Stomach (tissue), 19 donors: ENCODE measurements at regions of chr15 and their contacts with region 1.

Region 1: DNA sequence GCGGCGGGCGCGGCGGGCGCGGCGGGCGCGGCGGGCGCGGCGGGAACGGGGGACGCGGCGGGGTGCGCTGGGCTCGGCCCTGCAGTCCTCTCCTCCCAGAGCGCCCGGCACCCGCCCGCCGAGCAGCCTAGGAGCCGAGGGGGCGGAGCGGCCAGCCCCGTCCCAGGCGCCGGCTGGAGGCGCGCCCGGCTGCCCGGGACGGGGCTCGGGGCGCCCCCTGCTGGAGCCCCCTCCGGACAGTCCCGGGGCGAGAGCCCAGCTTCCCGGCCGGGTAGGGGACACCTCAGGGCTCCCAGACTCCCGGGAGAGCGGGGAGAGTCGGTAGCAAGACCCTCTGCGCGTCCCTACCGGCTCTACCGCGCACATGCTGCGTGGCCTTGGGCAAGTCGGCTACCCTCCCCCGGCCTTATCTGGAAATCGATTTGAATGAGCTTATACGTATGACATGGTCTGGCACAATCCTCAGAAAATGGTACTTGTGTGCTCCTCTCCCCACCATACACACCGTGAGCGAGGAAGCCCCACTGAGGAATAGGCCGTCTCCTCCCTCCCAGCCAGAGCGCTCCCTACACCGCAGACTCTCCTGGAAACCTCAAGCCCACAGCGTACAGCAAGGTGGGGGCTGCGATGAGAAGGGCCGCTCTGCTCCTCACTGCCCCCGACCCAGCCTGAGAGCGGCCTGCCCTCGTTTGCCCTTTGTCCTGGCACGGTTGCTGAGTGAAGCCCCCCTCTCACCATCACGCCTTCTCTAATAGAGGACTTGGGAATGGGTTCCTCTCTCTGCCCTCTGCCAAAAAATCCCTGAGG is at the start of gene DAPK2:
- DNase-seq: peak; percentile 85 to 89
- H3K4me3 ChIP-seq: peak within 1 kb of the TSS; percentile 57 to 78 (median 62)
- H3K27ac ChIP-seq: peak within 1 kb of the TSS; percentile 16 to 83 (median 68)
- H3K4me1 ChIP-seq: peaks cover 21 to 52% (median 24%) of the 10 kb centered on the region in 4 donors
- H3K27me3 ChIP-seq: peaks cover 0 to 5% (median 0%) of the 10 kb centered on the region in 3 donors
- CTCF ChIP-seq: peak in 5 of 7 experiments; percentile 41 to 90 (median 69)
- EP300 ChIP-seq: no peak
- POLR2A ChIP-seq: no peak
- total RNA-seq, gene DAPK2: 9.0 to 178 (median 16.8) TPM

Region 2: DNA sequence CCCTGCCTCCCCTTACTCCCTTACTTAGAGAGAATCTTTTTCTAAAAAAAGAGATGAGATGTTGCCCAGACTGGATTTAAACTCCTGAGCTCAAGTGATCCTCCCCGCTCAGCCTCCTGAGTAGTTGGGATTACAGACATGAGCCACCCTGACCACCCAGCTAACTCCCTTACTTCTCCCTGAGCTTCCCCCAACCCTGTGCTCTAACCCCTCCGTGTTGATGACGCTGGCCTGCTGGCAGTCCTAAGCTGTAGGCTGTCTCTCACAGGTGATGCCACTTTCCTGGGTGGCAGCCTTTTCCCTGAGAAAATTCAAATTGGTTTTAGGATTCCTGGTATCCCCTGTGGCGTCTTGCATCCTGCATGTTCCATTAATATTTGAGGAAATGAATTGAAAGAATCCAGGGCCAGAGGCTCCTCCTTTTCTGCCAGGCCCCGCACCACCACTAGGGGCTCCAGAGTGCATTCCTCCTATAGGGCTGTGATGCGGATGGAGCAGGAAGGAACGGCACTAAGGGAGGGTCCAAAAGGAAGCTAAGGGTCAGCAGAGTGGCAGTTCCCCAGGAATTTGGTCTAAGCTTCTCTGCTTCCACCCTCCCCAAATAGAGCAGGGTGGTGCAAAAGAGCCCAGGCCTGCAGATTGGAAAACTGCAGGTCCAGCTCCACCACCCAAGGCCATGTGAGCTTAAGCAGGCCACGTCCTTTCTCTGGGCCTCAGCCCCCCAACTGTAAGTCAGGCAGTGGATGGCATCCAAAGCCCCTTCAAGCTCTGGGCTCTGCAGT is 101.4 kb before region 1 on chr15:
- intact Hi-C with region 1: loop called (anchors 5 kb)
- DNase-seq: peak; percentile 80 to 88
- H3K4me3 ChIP-seq: no peak overlapping the region
- H3K27ac ChIP-seq: peak overlapping the region in 1 of 5 donors; percentile 19
- H3K4me1 ChIP-seq: peaks cover 6 to 32% (median 19%) of the 10 kb centered on the region in 4 donors
- H3K27me3 ChIP-seq: no peaks in the 10 kb centered on the region
- CTCF ChIP-seq: peak in 5 of 7 experiments; percentile 77 to 95 (median 91)
- EP300 ChIP-seq: no peak
- POLR2A ChIP-seq: no peak

Region 3: DNA sequence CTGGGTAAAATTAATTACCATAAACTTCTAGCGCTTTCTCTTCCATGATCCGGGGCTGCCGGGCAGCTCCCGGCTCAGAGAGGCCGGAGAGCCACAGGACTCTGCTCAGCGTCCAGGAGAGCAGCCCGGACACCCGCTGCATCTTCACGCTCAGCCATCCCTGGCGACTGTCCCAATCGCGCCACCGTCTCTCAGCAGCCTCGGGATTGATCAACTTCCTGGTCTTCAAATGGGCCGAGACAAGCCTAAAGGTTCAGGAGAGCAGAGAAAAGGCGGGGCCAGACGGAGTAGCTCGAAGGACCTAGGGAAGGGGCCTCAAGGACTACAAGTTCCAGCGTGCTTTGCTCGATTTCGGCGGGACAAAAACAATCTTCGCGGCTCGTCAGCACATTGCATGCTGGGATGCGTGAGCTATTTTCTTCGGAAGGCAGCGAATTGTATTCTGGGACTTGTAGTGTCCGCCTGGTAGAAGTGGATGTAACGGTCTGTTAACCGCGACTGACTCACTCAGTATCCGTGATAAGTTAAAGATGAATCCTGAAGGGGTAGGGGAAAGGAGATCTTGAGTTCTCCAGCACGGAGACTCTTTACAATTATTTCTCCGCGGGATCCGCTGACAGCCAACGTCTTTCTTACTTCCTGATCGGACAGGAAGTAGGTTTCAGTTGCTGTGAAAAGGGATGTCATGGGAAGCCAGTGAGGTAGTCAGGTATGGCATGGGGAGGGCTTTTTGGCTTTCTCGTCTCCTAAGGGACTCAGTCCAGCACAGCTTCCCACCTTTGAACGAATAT is 47.3 kb after region 1 on chr15 and contains the start of gene CIAO2A:
- intact Hi-C with region 1: no loop called
- DNase-seq: peak; percentile 95 to 99
- H3K4me3 ChIP-seq: peak within 1 kb of the TSS; percentile 63 to 88 (median 80)
- H3K27ac ChIP-seq: peak within 1 kb of the TSS; percentile 79 to 95 (median 92)
- H3K4me1 ChIP-seq: peaks cover 34 to 84% (median 63%) of the 10 kb centered on the region in 4 donors
- H3K27me3 ChIP-seq: no peaks in the 10 kb centered on the region
- CTCF ChIP-seq: no peak
- EP300 ChIP-seq: no peak
- POLR2A ChIP-seq: no peak
- total RNA-seq, gene CIAO2A: 27.2 to 425 (median 107) TPM

Region 4: GRCh38 chr15:64137226-64138220 is 91.0 kb after region 1 on chr15:
- intact Hi-C with region 1: no loop called
- DNase-seq: peak in 1 of 2 donors; percentile 32
- H3K4me3 ChIP-seq: no peak overlapping the region
- H3K27ac ChIP-seq: no peak overlapping the region
- H3K4me1 ChIP-seq: peaks cover 0 to 9% (median 0%) of the 10 kb centered on the region in 4 donors
- H3K27me3 ChIP-seq: no peaks in the 10 kb centered on the region
- CTCF ChIP-seq: no peak
- EP300 ChIP-seq: no peak
- POLR2A ChIP-seq: no peak